HepG2 (cell line): ENCODE measurements at regions of chr11 and their contacts with region 1.

Region 1: DNA sequence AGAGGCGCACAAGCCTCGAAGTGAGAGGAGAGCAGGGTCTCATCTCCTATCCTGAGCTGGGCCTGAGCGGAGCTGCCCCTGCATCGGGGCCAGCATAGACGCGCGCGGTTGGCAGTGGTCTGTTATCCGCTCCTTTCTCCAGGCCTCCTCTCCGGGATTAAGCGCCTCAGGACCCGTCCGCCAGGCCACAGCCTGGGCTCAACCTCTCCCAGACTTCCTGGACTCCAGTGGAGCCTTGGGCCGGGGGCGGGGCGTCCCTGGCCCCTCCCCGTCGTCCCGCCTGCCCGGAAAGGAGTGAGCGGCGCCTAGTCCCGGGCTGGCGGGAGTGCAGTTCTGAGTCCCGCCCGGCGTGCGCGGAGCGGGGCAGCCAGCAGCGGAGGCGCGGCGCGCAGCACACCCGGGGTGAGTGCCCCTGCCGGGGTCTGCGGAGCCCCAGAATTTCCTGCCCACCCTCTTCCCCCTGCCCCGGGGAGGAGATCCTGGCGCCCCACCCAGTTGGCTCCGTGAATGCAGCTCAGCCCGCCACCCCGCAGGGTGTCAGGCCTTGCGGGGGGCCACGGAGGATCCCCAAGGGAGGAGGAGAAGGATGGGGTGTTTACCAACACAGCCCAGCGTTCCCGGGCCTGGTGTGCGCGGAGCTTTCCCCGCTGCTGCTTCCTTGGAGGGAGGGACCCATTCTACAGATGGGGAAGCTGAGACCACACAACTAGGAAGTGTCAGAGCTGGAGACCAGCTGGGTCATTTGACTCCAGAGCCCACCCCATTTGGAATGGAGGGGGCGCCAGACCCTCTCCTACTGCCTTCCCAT is at the start of gene TCIRG1:
- DNase-seq: peak; percentile 79
- ATAC-seq: peak; percentile 66
- H3K4me3 ChIP-seq: peak within 1 kb of the TSS; percentile 76 to 84 (median 78)
- H3K27ac ChIP-seq: peak within 1 kb of the TSS; percentile 95
- H3K4me1 ChIP-seq: peaks cover 30% of the 10 kb centered on the region
- H3K27me3 ChIP-seq: no peaks in the 10 kb centered on the region
- CTCF ChIP-seq: no peak
- EP300 ChIP-seq: no peak
- POLR2A ChIP-seq: peak in 1 of 2 experiments; percentile 74; a peak in 2 of 4 replicates
- RAD21 ChIP-seq: peak; percentile 14; the same call in 1 of the 2 replicates
- total RNA-seq, gene TCIRG1: 9.9 and 48.0 TPM in 2 replicates

Region 2: DNA sequence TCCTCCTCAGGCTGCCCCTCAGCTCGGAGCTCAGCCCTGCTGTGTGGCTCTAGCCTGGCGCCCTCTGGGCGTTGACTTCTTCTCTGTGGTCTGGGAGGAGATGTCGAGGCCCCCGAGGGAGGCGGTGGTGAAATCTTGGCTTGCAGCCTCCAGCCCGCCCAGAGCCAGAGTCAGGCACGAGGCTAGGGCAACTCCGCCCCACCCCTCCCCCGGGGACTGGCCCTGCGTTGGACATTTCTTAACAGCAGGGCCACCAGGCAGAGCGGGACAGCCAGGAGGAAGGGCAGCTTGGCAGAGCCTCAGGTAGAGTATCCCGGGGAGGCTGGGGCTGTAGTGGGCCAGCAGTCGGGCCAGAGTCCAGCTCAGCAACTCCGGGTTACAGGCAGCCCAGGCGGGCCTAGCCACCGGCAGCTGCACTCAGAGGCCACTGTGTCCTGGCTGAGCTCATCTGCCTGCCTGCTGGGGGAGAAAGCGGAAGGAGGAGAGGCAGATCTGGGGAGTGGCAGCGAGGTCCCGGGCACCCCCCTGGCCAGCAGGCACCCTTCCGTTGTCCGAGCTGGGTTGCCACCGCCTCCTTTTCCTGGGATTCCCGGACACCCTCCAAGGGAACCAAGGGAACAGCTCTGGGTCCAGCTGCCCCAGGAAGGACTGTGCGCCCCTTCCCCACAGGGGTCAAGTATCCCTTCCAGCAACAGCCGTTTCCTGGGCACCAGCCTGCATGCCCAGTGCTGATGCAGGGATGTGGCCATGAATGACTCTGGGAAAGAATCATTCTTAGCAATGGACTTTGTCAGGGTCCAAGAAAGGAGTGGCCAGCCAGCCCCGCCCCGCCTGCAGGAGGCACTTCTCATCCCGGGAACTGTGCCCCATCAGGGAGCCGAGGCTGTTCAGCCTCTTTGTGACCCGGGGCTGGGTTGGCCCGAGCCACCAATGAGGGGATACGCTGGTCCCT is 28.6 kb before region 1 on chr11 and contains the start of gene ALDH3B1:
- CTCF ChIA-PET with region 1: no interaction called
- POLR2A ChIA-PET with region 1: interaction called, 15 read pairs
- in situ Hi-C with region 1: no loop called
- intact Hi-C with region 1: no loop called
- DNase-seq: peak; percentile 73
- ATAC-seq: peak; percentile 80
- H3K4me3 ChIP-seq: peak within 1 kb of the TSS; percentile 41 to 77 (median 53)
- H3K27ac ChIP-seq: peak within 1 kb of the TSS; percentile 78
- H3K4me1 ChIP-seq: peaks cover 94% of the 10 kb centered on the region
- H3K27me3 ChIP-seq: no peaks in the 10 kb centered on the region
- CTCF ChIP-seq: peak; percentile 22
- EP300 ChIP-seq: no peak
- POLR2A ChIP-seq: peak in 1 of 2 experiments; percentile 62; a peak in 2 of 4 replicates
- RAD21 ChIP-seq: no peak; the same call in 1 of the 2 replicates
- total RNA-seq, gene ALDH3B1: 4.0 and 4.5 TPM in 2 replicates

Region 3: GRCh38 chr11:68025047-68025446 is 13.9 kb before region 1 on chr11:
- CTCF ChIA-PET with region 1: no interaction called
- POLR2A ChIA-PET with region 1: interaction called, 13 read pairs
- in situ Hi-C with region 1: no loop called
- intact Hi-C with region 1: loop called (anchors 1 kb)
- DNase-seq: no peak
- ATAC-seq: peak; percentile 20; the same call in 2 of the 3 replicates
- H3K4me3 ChIP-seq: no peak overlapping the region
- H3K27ac ChIP-seq: no peak overlapping the region
- H3K4me1 ChIP-seq: peaks cover 43% of the 10 kb centered on the region
- H3K27me3 ChIP-seq: no peaks in the 10 kb centered on the region
- CTCF ChIP-seq: peak; percentile 33
- EP300 ChIP-seq: no peak
- POLR2A ChIP-seq: no peak
- RAD21 ChIP-seq: no peak

Region 4: DNA sequence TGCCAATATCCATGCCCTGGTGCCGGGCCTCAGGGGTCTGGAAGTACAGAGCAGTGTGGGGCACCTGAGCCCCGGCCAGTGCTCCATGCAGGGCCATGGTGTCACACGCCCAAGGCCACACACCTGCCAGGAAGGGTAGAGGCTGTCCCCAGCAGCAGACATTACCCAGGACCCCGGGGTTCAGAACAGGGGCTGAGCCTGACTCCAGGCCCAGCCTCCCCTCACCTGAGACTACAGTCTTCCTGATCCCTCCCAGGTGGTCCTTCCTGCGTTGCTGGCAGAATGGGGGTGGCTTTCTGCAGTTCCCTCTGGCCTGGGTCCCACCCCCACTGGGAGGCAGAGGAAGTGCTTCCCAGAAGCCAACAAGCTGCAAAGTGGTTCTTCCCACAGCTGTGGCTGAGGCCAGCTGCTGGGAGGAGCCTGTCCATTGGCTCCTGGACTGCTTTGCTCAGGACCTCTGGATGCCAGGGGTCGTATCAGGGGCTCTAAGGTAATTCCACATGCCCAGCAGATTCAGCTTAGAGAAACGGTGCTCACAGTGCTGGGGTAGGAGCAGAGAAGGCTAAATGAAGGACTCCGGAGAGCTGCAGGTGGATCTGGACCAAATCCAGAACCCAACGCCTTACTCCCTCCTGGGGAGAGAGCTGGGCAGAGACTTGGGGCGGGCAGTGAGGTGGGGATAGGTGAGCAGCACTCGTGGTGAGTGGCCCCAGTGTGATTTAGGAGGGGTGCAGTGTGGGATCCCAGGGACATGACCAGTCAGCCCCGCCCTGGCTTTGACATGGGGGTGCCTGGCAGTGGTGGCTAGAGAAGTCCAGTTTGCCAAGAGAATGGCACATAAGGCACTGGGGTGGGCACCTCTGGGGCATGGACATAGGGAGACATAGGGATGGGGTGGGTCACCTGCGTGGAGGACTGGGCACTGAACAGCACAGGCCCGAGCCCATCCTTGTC is 12.5 kb after region 1 on chr11:
- CTCF ChIA-PET with region 1: no interaction called
- POLR2A ChIA-PET with region 1: interaction called, 11 read pairs
- in situ Hi-C with region 1: no loop called
- intact Hi-C with region 1: no loop called
- DNase-seq: no peak
- ATAC-seq: peak; percentile 17
- H3K4me3 ChIP-seq: no peak overlapping the region
- H3K27ac ChIP-seq: no peak overlapping the region
- H3K4me1 ChIP-seq: no peaks in the 10 kb centered on the region
- H3K27me3 ChIP-seq: no peaks in the 10 kb centered on the region
- CTCF ChIP-seq: no peak
- EP300 ChIP-seq: no peak
- POLR2A ChIP-seq: peak in 1 of 2 experiments; percentile 60; a peak in 2 of 4 replicates
- RAD21 ChIP-seq: no peak

Region 5: GRCh38 chr11:68127714-68128681 is 89.1 kb after region 1 on chr11:
- CTCF ChIA-PET with region 1: no interaction called
- POLR2A ChIA-PET with region 1: interaction called, 17 read pairs
- in situ Hi-C with region 1: no loop called
- intact Hi-C with region 1: no loop called
- DNase-seq: peak; percentile 90
- ATAC-seq: peak; percentile 84
- H3K4me3 ChIP-seq: peak overlapping the region; percentile 59 to 78 (median 62)
- H3K27ac ChIP-seq: peak overlapping the region; percentile 99
- H3K4me1 ChIP-seq: peaks cover 67% of the 10 kb centered on the region
- H3K27me3 ChIP-seq: no peaks in the 10 kb centered on the region
- CTCF ChIP-seq: peak; percentile 37; the same call in 1 of the 2 replicates
- EP300 ChIP-seq: peak in 1 of 2 experiments; percentile 74; a peak in 3 of 4 replicates
- POLR2A ChIP-seq: no peak
- RAD21 ChIP-seq: peak; percentile 46

Region 6: DNA sequence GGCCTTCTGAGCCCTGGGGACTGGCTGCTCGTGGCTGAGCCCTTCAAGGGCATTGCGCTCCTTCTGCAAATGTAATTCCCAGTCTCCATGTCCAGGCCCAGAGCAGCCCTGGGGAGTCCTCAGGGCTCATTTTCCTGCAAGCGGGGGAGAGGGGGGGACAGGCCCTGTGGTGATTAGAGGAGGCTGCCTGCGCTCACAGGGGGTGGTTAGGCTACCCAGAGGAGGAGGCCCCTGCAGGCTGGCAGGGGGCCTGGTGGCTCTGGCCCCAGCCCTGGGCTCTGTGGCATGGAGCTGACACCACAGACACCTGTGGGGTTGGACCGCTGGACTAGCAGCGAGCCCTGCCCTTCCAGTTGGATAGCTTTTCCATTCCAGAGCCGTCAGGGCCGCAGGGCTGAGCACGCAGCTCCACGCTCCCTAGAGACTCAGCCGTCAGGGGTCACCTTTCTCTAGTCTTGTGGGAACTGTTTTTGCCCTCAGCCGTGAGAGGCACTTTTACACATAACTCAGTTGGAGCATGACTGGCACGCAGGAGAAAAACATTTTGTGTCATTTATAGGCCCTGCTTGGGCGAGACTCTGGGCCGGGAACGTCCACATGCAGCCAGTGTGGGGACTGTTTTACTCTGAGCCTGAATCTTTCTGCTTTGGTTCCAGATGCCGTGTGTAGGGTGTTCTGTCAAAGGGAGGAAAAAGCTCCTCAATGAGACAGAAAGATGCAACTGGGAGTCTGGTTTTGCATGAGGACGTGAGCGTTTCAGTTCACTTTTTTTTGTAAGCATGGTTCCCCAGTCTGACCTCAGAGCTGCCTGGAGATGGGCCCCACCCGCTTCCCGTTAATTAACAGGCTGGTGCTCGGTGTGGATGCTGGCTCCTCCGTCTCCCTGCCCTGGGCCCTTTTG is 331.5 kb after region 1 on chr11:
- CTCF ChIA-PET with region 1: no interaction called
- POLR2A ChIA-PET with region 1: no interaction called
- in situ Hi-C with region 1: no loop called
- intact Hi-C with region 1: no loop called
- DNase-seq: no peak
- ATAC-seq: no peak
- H3K4me3 ChIP-seq: no peak overlapping the region
- H3K27ac ChIP-seq: no peak overlapping the region
- H3K4me1 ChIP-seq: peaks cover 40% of the 10 kb centered on the region
- H3K27me3 ChIP-seq: no peaks in the 10 kb centered on the region
- CTCF ChIP-seq: no peak
- EP300 ChIP-seq: no peak
- POLR2A ChIP-seq: no peak
- RAD21 ChIP-seq: no peak